ENCODE measurements at regions of chr2 and their contacts with region 1.

Region 1: GRCh38 chr2:48589170-48589767 is 28.4 kb upstream of the GTF2A1L start:
- DNase-seq: no peak

Region 2: GRCh38 chr2:48471048-48471474 is 118.2 kb before region 1 on chr2:
- intact Hi-C with region 1: loop called (anchors 10 kb)
- DNase-seq: no peak